Right ventricle myocardium inferior (tissue), 1 donor: ENCODE measurements at regions of chr10 and their contacts with region 1.

Region 1: GRCh38 chr10:97731346-97732051 is 5.4 kb upstream of the ZFYVE27 start:
- DNase-seq: no peak
- ATAC-seq: peak; percentile 71

Region 2: GRCh38 chr10:97676770-97677581 is 54.5 kb before region 1 on chr10:
- intact Hi-C with region 1: loop called (anchors 1 kb)
- DNase-seq: no peak
- ATAC-seq: peak; percentile 57

Region 3: DNA sequence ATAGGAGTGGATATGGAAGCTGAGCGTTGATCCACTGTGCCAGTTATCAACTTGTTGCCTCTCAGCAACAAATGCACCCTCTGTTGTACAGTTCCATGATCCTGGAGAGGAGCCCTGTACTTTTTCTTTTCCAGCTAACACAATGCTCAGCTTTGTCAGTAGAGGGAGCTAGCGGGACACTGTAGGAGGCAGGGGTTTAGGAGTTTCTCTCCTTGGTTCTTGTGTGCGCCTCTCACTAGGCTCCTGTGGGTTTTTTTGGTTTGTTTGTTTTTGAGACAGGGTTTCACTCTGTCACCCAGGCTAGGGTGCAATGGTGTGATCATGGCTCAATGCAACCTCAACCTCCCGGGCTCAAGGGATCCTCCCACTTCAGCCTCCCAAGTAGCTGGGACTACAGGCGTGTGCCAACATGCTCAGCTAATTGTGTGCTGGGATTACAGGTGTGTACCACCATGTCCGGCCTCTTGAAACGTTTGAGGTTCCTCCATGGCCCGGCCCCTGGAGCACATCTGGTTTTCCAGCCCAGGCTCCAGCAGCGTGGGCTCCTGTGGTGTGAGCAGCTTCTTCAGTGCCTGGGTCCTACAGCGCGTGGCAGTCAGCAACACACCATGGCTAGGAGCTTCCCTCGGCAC is 29.9 kb before region 1 on chr10:
- intact Hi-C with region 1: loop called (anchors 2 kb)
- DNase-seq: no peak
- ATAC-seq: peak; percentile 72

Region 4: DNA sequence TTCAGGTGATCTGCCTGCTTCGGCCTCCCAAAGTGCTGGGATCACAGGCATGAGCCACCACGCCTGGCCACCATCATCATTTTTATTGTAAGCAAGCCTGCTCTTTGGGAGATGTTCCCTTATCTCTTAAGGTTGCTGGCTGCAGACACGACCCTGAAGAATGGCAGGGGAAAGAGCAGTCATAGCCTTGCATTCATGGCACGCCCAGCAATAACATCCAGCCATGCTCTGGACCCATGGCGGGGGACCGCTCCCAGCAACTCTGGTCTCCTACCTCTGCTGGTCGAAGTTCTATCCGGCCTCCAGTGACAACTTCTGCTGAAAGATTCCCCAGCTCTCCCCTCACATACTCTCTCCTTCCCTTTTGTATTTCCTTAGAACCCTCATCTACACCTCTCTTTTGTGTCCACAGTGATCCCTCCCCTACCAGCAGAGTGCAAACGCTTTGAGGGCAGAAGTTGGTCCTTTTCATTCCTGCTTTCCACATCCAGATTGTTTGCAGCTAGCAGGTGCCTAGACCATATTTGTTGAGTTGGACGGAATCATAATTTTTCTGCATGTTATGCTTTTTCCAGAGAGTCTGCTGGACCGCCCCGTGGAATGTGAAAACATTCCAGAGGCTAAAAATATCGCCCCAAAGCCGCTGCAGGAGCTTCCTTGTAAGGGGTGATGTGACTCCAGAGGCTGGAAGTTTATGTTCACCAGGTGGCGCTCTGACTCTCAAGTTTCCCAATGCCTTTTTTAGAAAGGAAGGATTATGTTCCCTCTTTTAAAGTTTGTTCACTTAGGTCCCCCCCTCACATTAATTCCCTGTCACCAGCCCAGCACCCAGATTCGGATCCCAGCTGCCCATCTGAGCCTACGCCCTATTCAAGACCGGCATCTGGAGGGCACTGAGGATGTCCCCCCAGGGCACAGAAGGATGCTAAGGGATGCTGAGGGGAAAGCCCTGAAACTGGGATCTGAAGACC is 22.2 kb before region 1 on chr10:
- intact Hi-C with region 1: loop called (anchors 1 kb)
- DNase-seq: no peak
- ATAC-seq: no peak